Colonic mucosa (tissue), 4 donors: ENCODE measurements at regions of chr4 and their contacts with region 1.

Region 1: DNA sequence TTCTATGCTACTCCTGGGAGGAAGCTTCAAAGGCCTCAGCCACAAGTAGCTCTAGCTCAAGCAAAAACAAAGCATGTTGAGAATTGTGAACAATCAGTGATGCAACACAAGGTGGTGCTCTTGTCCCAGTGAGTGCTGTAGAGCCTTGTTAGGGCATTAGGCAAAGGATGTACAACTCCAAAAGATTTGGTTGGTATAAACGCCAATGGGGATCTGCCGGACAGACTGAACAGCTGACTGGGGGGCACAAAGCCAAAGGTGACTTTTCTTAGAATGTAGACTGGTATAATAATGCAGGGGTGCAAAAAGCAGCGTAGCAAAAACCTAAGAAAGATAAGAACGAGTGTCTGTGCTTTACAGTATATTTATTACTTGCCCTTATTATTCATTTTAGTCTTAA is 62.6 kb upstream of the ALB start:
- DNase-seq: peak; percentile 30
- H3K4me3 ChIP-seq: no peak overlapping the region
- H3K27ac ChIP-seq: no peak overlapping the region
- H3K4me1 ChIP-seq: no peaks in the 10 kb centered on the region
- H3K27me3 ChIP-seq: no peaks in the 10 kb centered on the region
- CTCF ChIP-seq: peak; percentile 58

Region 2: GRCh38 chr4:73446336-73446938 is 105.0 kb after region 1 on chr4:
- intact Hi-C with region 1: loop called (anchors 5 kb)
- DNase-seq: no peak
- H3K4me3 ChIP-seq: no peak overlapping the region
- H3K27ac ChIP-seq: no peak overlapping the region
- H3K4me1 ChIP-seq: no peaks in the 10 kb centered on the region
- H3K27me3 ChIP-seq: no peaks in the 10 kb centered on the region
- CTCF ChIP-seq: peak; percentile 68